CD8-positive, alpha-beta memory T cell (primary cell): ENCODE measurements at regions of chr3 and their contacts with region 1.

Region 1: GRCh38 chr3:17645072-17645698 is 97.2 kb downstream of the TBC1D5 start:
- DNase-seq: peak in 2 of 5 donors; percentile 7 to 13
- H3K4me3 ChIP-seq: no peak overlapping the region
- H3K4me3 Mint-ChIP-seq: no peak overlapping the region
- H3K27ac ChIP-seq: no peak overlapping the region
- H3K27ac Mint-ChIP-seq: no peak overlapping the region
- H3K4me1 ChIP-seq: no peaks in the 10 kb centered on the region
- H3K4me1 Mint-ChIP-seq: peaks cover 0 to 5% (median 3%) of the 10 kb centered on the region in 3 donors
- H3K27me3 ChIP-seq: no peaks in the 10 kb centered on the region
- H3K27me3 Mint-ChIP-seq: no peaks in the 10 kb centered on the region

Region 2: DNA sequence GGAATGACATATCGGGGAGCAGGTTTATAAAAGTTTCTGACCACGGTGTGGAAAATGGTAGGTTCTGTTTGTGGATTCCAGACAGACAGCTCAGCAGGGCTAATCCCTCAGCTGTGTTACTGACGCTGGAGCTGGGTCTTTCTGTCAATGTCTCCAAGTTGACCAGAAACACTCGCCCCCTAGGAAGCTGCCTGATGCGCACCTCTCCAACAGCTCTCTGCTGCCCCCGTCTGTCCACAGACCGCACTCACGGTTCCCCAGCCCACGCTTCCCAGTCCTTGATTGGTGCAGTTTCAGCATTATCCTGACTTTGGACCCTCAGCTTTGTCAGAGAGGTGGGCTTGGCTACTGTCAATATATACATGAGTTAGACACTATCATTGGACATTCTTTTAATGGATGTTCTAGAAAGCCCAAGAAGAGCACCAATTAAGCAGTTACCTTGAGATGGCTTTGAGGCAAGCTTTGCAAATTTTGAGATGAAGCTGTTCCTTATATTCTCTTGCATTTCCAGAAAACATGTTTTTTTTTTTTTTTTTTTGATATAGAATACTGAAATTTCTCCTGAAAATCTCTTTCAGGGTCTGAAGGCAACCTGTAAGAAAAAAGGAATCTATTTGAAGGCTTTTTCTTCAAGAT is 196.1 kb after region 1 on chr3:
- CTCF ChIA-PET with region 1: interaction called, 38 read pairs
- POLR2A ChIA-PET with region 1: no interaction called
- DNase-seq: peak; percentile 38 to 72 (median 55)
- H3K4me3 ChIP-seq: no peak overlapping the region
- H3K4me3 Mint-ChIP-seq: no peak overlapping the region
- H3K27ac ChIP-seq: no peak overlapping the region
- H3K27ac Mint-ChIP-seq: no peak overlapping the region
- H3K4me1 ChIP-seq: no peaks in the 10 kb centered on the region
- H3K4me1 Mint-ChIP-seq: no peaks in the 10 kb centered on the region
- H3K27me3 ChIP-seq: no peaks in the 10 kb centered on the region
- H3K27me3 Mint-ChIP-seq: peaks cover 1 to 7% of the 10 kb centered on the region in 2 donors